GM12878 (cell line): ENCODE measurements at regions of chr13 and their contacts with region 1.

Region 1: DNA sequence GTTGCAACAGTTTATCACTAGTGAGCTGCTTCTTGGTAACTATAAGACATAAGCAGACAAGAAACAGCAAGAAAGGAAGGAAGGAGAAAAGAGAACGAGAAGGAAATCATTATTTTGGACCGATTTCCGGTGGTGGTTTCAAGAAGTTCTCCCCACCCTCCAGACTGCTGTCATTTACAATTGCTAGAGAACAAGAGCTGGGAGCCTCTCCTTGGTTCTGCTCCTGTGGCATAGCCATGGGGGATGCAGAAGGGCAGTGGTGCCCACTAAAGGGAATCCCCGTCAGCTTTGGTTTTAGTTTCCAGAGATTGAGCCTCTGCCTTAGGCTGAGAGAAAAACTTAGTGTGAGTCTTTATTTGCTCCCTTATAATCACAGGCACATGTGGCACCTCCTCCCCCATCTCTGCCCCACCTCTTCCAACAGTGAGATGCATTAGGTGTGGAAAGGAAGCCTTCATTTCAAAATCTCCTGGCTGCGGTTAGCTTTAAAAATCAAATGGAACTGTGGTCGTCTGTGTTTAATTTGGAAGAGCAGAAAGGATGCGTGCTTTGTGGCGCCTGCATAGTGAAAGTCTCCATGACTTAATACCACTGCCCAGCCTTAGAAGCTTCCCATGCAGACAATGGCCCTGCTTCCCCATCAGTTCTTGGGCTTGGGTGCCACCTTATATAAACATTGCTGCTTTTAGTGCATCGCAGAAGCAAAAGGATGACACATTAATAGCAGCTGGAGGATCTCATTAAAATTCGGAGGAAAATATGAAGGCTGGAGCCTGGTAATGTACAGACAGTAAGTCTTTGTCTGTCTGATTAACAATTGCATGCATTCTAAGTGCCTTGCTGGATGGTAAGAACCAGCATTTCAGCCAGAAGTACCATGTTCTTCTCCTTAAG is 25.0 kb downstream of the LRCH1 start:
- DNase-seq: no peak
- ATAC-seq: peak; percentile 46
- H3K4me3 ChIP-seq: peak overlapping the region; percentile 71
- H3K27ac ChIP-seq: peak overlapping the region; percentile 83
- H3K4me1 ChIP-seq: peaks cover 76% of the 10 kb centered on the region
- H3K27me3 ChIP-seq: no peaks in the 10 kb centered on the region
- CTCF ChIP-seq: no peak
- EP300 ChIP-seq: no peak
- POLR2A ChIP-seq: no peak
- RAD21 ChIP-seq: no peak

Region 2: GRCh38 chr13:46565808-46566750 is 11.9 kb before region 1 on chr13:
- CTCF ChIA-PET with region 1: interaction called, 10 read pairs
- POLR2A ChIA-PET with region 1: interaction called, 27 read pairs
- RAD21 ChIA-PET with region 1: interaction called, 21 read pairs
- SMC1A ChIA-PET with region 1: interaction called, 58 read pairs
- in situ Hi-C with region 1: no loop called
- intact Hi-C with region 1: no loop called
- DNase-seq: no peak
- ATAC-seq: peak; percentile 85
- H3K4me3 ChIP-seq: peak overlapping the region; percentile 4; the same call in 1 of the 2 replicates
- H3K27ac ChIP-seq: peak overlapping the region; percentile 7
- H3K4me1 ChIP-seq: peaks cover 24% of the 10 kb centered on the region
- H3K27me3 ChIP-seq: no peaks in the 10 kb centered on the region
- CTCF ChIP-seq: no peak
- EP300 ChIP-seq: no peak
- POLR2A ChIP-seq: no peak
- RAD21 ChIP-seq: no peak

Region 3: GRCh38 chr13:46603165-46603603 is 25.2 kb after region 1 on chr13:
- CTCF ChIA-PET with region 1: interaction called, 5 read pairs
- POLR2A ChIA-PET with region 1: interaction called, 14 read pairs
- RAD21 ChIA-PET with region 1: interaction called, 97 read pairs
- SMC1A ChIA-PET with region 1: interaction called, 367 read pairs
- in situ Hi-C with region 1: no loop called
- intact Hi-C with region 1: no loop called
- DNase-seq: no peak
- ATAC-seq: no peak
- H3K4me3 ChIP-seq: no peak overlapping the region
- H3K27ac ChIP-seq: no peak overlapping the region
- H3K4me1 ChIP-seq: peaks cover 47% of the 10 kb centered on the region
- H3K27me3 ChIP-seq: no peaks in the 10 kb centered on the region
- CTCF ChIP-seq: peak; percentile 28 to 38 (median 36); a peak in 3 of 6 replicates
- EP300 ChIP-seq: no peak
- POLR2A ChIP-seq: no peak
- RAD21 ChIP-seq: peak; percentile 48

Region 4: GRCh38 chr13:46622630-46623256 is 44.8 kb after region 1 on chr13:
- CTCF ChIA-PET with region 1: interaction called, 7 read pairs
- POLR2A ChIA-PET with region 1: interaction called, 8 read pairs
- RAD21 ChIA-PET with region 1: interaction called, 19 read pairs
- SMC1A ChIA-PET with region 1: interaction called, 42 read pairs
- in situ Hi-C with region 1: no loop called
- intact Hi-C with region 1: no loop called
- DNase-seq: no peak
- ATAC-seq: peak; percentile 30
- H3K4me3 ChIP-seq: peak overlapping the region; percentile 1; the same call in 1 of the 2 replicates
- H3K27ac ChIP-seq: peak overlapping the region; percentile 55
- H3K4me1 ChIP-seq: peaks cover 61% of the 10 kb centered on the region
- H3K27me3 ChIP-seq: no peaks in the 10 kb centered on the region
- CTCF ChIP-seq: no peak
- EP300 ChIP-seq: no peak
- POLR2A ChIP-seq: no peak
- RAD21 ChIP-seq: no peak

Region 5: DNA sequence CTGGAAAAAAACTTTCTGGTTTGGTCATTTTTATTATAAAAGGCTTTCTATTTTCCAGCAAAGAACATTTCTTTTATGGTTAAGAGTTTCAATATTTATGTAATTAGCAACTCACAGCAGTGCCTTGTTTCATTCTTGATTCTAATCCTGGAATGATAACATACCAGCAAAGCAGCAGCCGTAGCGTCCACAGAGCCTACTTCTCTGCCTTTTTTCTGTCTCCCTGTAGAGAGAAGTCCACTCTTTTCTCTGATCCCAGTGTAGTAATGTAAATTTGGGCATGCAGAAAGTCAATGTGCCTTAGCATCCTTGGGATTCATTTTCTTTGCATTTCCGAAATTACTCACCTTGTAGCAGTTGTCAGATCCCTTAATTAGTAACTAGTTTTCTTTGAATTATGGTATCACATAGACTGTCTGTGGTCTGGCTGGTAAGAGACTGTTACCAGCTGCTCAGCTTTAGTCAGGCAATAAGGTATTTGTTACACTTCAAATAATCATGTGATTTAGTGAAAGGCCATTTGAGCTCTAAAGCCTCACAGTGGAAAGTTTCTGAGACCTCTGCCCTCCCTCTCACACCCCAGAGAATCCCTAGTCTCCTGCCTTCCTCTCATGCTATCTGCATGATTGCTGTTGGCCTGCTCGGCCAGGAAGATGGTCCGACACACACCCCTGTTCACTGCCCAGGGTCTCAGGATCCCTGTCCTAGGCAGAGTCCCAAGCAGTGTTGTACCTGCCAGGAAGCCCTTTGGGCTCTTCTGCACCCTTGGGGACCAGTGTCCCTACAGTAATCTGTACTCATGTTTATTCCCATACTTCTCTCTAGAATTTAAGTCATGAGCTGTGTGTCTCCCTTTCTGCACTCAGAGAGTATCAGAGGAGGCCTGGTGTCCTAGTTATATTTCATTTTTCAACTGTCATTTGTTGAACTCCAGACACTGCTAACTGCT is 61.4 kb after region 1 on chr13:
- CTCF ChIA-PET with region 1: interaction called, 3 read pairs
- POLR2A ChIA-PET with region 1: interaction called, 7 read pairs
- RAD21 ChIA-PET with region 1: interaction called, 7 read pairs
- SMC1A ChIA-PET with region 1: interaction called, 10 read pairs
- in situ Hi-C with region 1: no loop called
- intact Hi-C with region 1: no loop called
- DNase-seq: peak; percentile 71
- ATAC-seq: peak; percentile 95
- H3K4me3 ChIP-seq: peak overlapping the region; percentile 41
- H3K27ac ChIP-seq: peak overlapping the region; percentile 56
- H3K4me1 ChIP-seq: peaks cover 20% of the 10 kb centered on the region
- H3K27me3 ChIP-seq: no peaks in the 10 kb centered on the region
- CTCF ChIP-seq: no peak
- EP300 ChIP-seq: peak; percentile 93 to 96
- POLR2A ChIP-seq: no peak
- RAD21 ChIP-seq: no peak

Region 6: GRCh38 chr13:46668302-46668720 is 90.4 kb after region 1 on chr13:
- CTCF ChIA-PET with region 1: interaction called, 5 read pairs
- POLR2A ChIA-PET with region 1: interaction called, 11 read pairs
- RAD21 ChIA-PET with region 1: interaction called, 23 read pairs
- SMC1A ChIA-PET with region 1: interaction called, 23 read pairs
- in situ Hi-C with region 1: no loop called
- intact Hi-C with region 1: no loop called
- DNase-seq: no peak
- ATAC-seq: peak; percentile 11
- H3K4me3 ChIP-seq: peak overlapping the region; percentile 66
- H3K27ac ChIP-seq: peak overlapping the region; percentile 91
- H3K4me1 ChIP-seq: peaks cover 30% of the 10 kb centered on the region
- H3K27me3 ChIP-seq: no peaks in the 10 kb centered on the region
- CTCF ChIP-seq: no peak
- EP300 ChIP-seq: 0 out of 4 replicates have a peak, but pooled peaks of 1 of the 2 experiments have one; percentile 17
- POLR2A ChIP-seq: no peak
- RAD21 ChIP-seq: no peak

Region 7: GRCh38 chr13:47036291-47037008 is 458.5 kb after region 1 on chr13:
- CTCF ChIA-PET with region 1: no interaction called
- POLR2A ChIA-PET with region 1: no interaction called
- RAD21 ChIA-PET with region 1: no interaction called
- SMC1A ChIA-PET with region 1: no interaction called
- in situ Hi-C with region 1: no loop called
- intact Hi-C with region 1: no loop called
- DNase-seq: peak; percentile 64
- ATAC-seq: peak; percentile 100
- H3K4me3 ChIP-seq: no peak overlapping the region; the same call in 1 of the 2 replicates
- H3K27ac ChIP-seq: peak overlapping the region; percentile 55
- H3K4me1 ChIP-seq: peaks cover 10% of the 10 kb centered on the region; the same call in 1 of the 2 replicates
- H3K27me3 ChIP-seq: no peaks in the 10 kb centered on the region
- CTCF ChIP-seq: no peak
- EP300 ChIP-seq: peak in 1 of 2 experiments; percentile 48; a peak in 1 of 4 replicates
- POLR2A ChIP-seq: no peak
- RAD21 ChIP-seq: no peak

Region 8: GRCh38 chr13:47087841-47088240 is 509.9 kb after region 1 on chr13:
- CTCF ChIA-PET with region 1: no interaction called
- POLR2A ChIA-PET with region 1: no interaction called
- RAD21 ChIA-PET with region 1: no interaction called
- SMC1A ChIA-PET with region 1: no interaction called
- in situ Hi-C with region 1: no loop called
- intact Hi-C with region 1: no loop called
- DNase-seq: no peak
- ATAC-seq: no peak; the same call in 2 of the 3 replicates
- H3K4me3 ChIP-seq: no peak overlapping the region
- H3K27ac ChIP-seq: no peak overlapping the region
- H3K4me1 ChIP-seq: no peaks in the 10 kb centered on the region
- H3K27me3 ChIP-seq: no peaks in the 10 kb centered on the region
- CTCF ChIP-seq: no peak
- EP300 ChIP-seq: no peak
- POLR2A ChIP-seq: no peak
- RAD21 ChIP-seq: no peak